Left cardiac atrium (tissue), 4 donors: ENCODE measurements at regions of chr1 and their contacts with region 1.

Region 1: GRCh38 chr1:221753828-221754188 is 11.9 kb upstream of the DUSP10 start:
- DNase-seq: no peak
- ATAC-seq: no peak

Region 2: GRCh38 chr1:221543529-221544120 is 210.2 kb before region 1 on chr1:
- intact Hi-C with region 1: loop called in 1 of 2 experiments (anchors 10 kb)
- DNase-seq: no peak
- ATAC-seq: peak in 1 of 2 donors; percentile 41

Region 3: GRCh38 chr1:222339376-222339947 is 585.7 kb after region 1 on chr1:
- intact Hi-C with region 1: no loop called
- DNase-seq: no peak
- ATAC-seq: no peak